ENCODE measurements at regions of chr10 and their contacts with region 1.

Region 1: GRCh38 chr10:102310361-102311024 is 65.2 kb downstream of the GBF1 start:
- DNase-seq: no peak
- ATAC-seq: no peak
- H3K4me3 ChIP-seq: no peak overlapping the region
- H3K27ac ChIP-seq: no peak overlapping the region
- H3K4me1 ChIP-seq: no peaks in the 10 kb centered on the region
- H3K27me3 ChIP-seq: no peaks in the 10 kb centered on the region
- CTCF ChIP-seq: no peak
- EP300 ChIP-seq: no peak
- POLR2A ChIP-seq: no peak
- RAD21 ChIP-seq: no peak

Region 2: GRCh38 chr10:102368072-102368471 is 57.6 kb after region 1 on chr10:
- CTCF ChIA-PET with region 1: no interaction called
- POLR2A ChIA-PET with region 1: no interaction called
- RAD21 ChIA-PET with region 1: no interaction called
- SMC1A ChIA-PET with region 1: no interaction called
- in situ Hi-C with region 1: no loop called
- intact Hi-C with region 1: no loop called
- DNase-seq: no peak
- ATAC-seq: no peak
- H3K4me3 ChIP-seq: no peak overlapping the region
- H3K27ac ChIP-seq: no peak overlapping the region
- H3K4me1 ChIP-seq: no peaks in the 10 kb centered on the region
- H3K27me3 ChIP-seq: no peaks in the 10 kb centered on the region
- CTCF ChIP-seq: no peak
- EP300 ChIP-seq: no peak
- POLR2A ChIP-seq: no peak
- RAD21 ChIP-seq: no peak

Region 3: DNA sequence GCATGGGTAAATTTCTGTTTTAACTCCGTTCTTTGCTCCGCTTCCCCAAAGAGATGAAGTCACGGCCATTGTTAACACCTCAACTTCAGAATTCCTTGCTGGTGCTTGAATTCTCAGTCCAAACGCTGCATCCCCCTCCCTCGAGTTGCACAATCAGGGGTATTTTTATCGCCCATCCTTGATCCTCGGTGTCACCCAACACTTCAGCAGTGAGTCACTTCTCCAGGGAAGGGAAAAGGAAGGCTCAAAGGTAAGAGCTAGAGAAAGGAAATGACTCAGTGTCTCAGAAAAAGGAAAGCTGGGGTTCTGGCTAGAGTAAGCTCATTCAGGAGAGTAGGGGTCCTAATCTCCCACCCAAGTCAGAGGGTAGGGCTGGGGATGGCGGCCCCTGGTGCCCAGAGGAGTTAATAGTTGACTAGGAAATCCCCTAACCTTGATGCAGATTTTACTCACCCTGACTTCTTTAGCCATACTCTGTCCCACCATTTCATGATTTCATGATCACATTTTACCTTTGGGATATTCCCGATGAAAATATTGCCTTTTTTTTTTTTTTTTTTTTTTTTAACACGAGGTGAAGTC is 294.0 kb after region 1 on chr10:
- CTCF ChIA-PET with region 1: no interaction called
- POLR2A ChIA-PET with region 1: interaction called, 13 read pairs
- RAD21 ChIA-PET with region 1: no interaction called
- SMC1A ChIA-PET with region 1: no interaction called
- in situ Hi-C with region 1: no loop called
- intact Hi-C with region 1: no loop called
- DNase-seq: no peak
- ATAC-seq: peak; percentile 62
- H3K4me3 ChIP-seq: no peak overlapping the region
- H3K27ac ChIP-seq: no peak overlapping the region
- H3K4me1 ChIP-seq: peaks cover 6% of the 10 kb centered on the region
- H3K27me3 ChIP-seq: no peaks in the 10 kb centered on the region
- CTCF ChIP-seq: no peak
- EP300 ChIP-seq: no peak
- POLR2A ChIP-seq: no peak
- RAD21 ChIP-seq: no peak

Measured in GM12878 (cell line).